CD8-positive, alpha-beta memory T cell (primary cell): ENCODE measurements at regions of chr3 and their contacts with region 1.

Region 1: DNA sequence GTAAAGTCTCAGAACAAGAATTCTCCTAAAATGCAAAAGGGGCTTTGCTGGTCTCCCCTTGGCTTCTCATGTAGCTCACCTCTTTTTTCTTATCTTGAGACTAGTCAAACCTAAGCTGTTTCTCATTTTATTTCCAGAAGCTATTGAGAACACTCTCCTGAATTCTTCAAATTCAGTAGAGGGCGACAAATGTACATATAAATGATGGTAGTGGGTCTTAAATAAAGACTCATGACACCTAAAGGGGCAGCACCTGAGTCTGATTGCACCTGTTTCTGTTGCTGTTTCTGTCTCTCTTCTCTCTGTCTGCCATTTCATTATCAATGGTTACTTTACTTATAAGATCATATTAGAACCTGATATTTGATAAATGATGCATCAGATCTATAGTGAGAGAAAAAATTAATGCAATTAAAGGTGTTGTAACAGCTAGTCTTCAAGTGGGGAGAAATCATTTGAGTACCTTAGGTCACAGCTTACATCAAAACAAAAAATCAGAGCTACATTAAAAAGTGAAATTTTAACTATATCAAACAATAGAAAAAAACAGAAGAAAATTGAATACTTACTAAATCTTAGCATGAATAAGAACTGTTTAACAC is 7.0 kb downstream of the ADIPOQ start:
- DNase-seq: peak in 2 of 5 donors; percentile 59 to 65
- H3K4me3 ChIP-seq: no peak overlapping the region
- H3K4me3 Mint-ChIP-seq: no peak overlapping the region
- H3K27ac ChIP-seq: no peak overlapping the region
- H3K27ac Mint-ChIP-seq: peak overlapping the region in 4 of 8 donors; percentile 22 to 71 (median 48)
- H3K4me1 ChIP-seq: no peaks in the 10 kb centered on the region
- H3K4me1 Mint-ChIP-seq: peaks cover 18 to 26% (median 18%) of the 10 kb centered on the region in 3 donors
- H3K27me3 ChIP-seq: no peaks in the 10 kb centered on the region
- H3K27me3 Mint-ChIP-seq: peaks cover 14 to 19% of the 10 kb centered on the region in 2 donors

Region 2: GRCh38 chr3:186909078-186909853 is 59.8 kb after region 1 on chr3:
- CTCF ChIA-PET with region 1: interaction called, 16 read pairs
- POLR2A ChIA-PET with region 1: no interaction called
- DNase-seq: peak; percentile 58 to 89 (median 82)
- H3K4me3 ChIP-seq: peak overlapping the region; percentile 40
- H3K4me3 Mint-ChIP-seq: peak overlapping the region; percentile 78 to 86 (median 80)
- H3K27ac ChIP-seq: peak overlapping the region; percentile 73
- H3K27ac Mint-ChIP-seq: peak overlapping the region; percentile 88 to 98 (median 92)
- H3K4me1 ChIP-seq: peaks cover 22% of the 10 kb centered on the region
- H3K4me1 Mint-ChIP-seq: peaks cover 41 to 56% (median 51%) of the 10 kb centered on the region in 3 donors
- H3K27me3 ChIP-seq: no peaks in the 10 kb centered on the region
- H3K27me3 Mint-ChIP-seq: no peaks in the 10 kb centered on the region

Region 3: DNA sequence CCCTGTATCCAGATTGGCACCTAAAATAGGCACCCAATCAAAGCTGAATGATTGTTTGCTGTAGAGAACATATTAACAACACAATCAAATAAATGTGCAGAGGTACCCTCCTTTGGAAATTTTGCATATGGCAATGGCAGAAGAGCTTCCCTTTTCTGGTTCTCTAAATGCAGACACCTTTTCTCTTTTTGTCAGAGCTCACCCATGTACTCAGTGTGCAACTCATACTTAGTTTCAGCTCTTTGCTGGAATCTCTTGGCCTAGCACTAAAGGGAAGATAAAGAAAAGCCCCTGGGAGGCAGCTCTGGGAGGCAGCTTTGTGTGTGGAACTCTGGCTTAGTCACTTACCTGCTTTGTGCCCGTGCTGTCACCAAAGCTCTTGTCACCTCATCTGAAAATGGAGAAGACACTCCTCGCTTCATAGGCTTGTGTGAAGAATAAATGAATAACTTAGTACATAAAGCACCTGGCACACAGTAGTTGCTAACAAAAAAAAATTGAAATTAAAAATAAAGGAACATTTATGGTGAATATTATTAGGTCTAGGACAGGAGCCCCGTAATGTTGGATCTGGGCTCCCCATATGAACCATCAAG is 109.7 kb after region 1 on chr3:
- CTCF ChIA-PET with region 1: interaction called, 11 read pairs
- POLR2A ChIA-PET with region 1: interaction called, 9 read pairs
- DNase-seq: no peak
- H3K4me3 ChIP-seq: no peak overlapping the region
- H3K4me3 Mint-ChIP-seq: no peak overlapping the region
- H3K27ac ChIP-seq: no peak overlapping the region
- H3K27ac Mint-ChIP-seq: peak overlapping the region in 7 of 8 donors; percentile 10 to 72 (median 51)
- H3K4me1 ChIP-seq: peaks cover 24% of the 10 kb centered on the region
- H3K4me1 Mint-ChIP-seq: peaks cover 82 to 90% (median 89%) of the 10 kb centered on the region in 3 donors
- H3K27me3 ChIP-seq: no peaks in the 10 kb centered on the region
- H3K27me3 Mint-ChIP-seq: no peaks in the 10 kb centered on the region

Region 4: DNA sequence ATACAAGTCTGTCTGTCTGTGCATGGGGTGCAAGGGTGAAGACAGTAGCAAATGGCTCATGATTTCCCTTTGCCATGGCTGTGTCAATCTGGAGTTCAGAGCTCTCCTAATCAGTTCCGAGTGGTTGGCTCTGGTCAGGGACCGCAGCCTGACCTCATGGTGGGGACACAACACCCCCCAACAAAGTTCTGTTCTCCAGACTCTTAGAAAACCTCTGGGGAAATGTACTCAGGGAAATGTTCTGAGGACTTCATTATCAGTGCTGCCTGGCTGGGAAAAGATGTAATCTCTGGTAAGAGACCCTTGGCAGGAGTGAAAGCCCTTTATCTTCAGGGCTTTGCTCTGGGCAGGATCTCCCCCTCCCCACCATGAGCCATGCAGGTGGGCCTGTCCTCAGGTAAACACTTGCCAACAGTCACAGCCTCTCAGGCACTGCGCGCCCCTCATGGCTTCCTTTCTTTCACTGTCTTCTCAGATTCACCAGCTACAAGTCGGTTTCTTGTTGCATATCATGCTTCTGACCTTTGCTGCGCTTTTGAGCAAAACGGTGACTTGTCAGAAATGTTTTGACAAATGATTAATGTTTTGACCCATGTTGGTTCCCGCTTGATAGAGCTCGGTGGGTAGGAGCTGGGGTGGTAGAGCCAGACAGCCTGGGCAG is 176.3 kb after region 1 on chr3:
- CTCF ChIA-PET with region 1: interaction called, 20 read pairs
- POLR2A ChIA-PET with region 1: no interaction called
- DNase-seq: peak in 1 of 5 donors; percentile 46
- H3K4me3 ChIP-seq: peak overlapping the region; percentile 64
- H3K4me3 Mint-ChIP-seq: peak overlapping the region; percentile 79 to 92 (median 84)
- H3K27ac ChIP-seq: peak overlapping the region; percentile 49
- H3K27ac Mint-ChIP-seq: peak overlapping the region; percentile 82 to 97 (median 89)
- H3K4me1 ChIP-seq: peaks cover 74% of the 10 kb centered on the region
- H3K4me1 Mint-ChIP-seq: peaks cover 68 to 81% (median 78%) of the 10 kb centered on the region in 3 donors
- H3K27me3 ChIP-seq: no peaks in the 10 kb centered on the region
- H3K27me3 Mint-ChIP-seq: no peaks in the 10 kb centered on the region

Region 5: DNA sequence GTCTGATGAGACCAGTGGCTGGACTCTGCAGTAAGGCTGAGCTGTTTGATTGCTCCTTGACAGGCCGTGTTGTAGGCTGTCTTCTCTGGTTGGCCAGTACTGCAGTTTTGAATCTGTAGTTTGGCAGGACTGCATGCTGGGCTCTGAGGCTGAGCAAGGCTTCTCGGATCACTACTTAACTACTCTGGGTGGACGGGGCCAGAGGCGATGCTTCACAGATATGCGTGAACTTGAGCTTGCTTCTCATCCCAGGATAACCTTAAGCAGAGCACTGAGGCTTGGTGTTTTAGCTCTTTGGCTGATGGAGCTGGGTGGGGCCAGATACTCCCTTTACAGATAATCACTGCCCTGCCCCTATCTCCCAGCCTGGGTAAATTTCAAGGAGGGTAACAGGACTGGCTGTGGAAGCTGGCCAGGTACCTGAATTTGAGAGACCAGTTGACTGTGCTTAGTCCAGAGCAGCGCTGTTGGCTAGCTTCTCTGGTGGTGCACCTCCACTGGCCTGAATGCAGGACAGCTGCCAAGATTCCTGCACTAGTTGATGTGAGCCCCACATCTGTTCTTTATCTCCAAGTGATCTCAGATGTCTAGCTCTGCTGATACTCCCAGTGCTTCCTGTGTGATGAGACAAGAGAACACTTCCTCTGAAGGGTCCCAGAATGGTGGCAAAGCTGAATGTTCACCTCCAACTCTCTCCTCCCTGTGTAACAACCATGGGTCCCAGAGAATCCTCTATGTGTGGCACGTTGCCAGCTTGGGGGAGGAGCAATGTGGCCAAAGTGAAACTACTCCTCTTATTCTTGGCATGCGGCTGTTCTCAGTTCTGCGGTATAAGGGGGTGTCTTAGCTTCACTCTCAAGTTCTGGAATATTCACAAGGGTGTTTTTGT is 252.0 kb after region 1 on chr3:
- CTCF ChIA-PET with region 1: interaction called, 12 read pairs
- POLR2A ChIA-PET with region 1: no interaction called
- DNase-seq: peak; percentile 27 to 68 (median 40)
- H3K4me3 ChIP-seq: peak overlapping the region; percentile 43
- H3K4me3 Mint-ChIP-seq: peak overlapping the region; percentile 17 to 86 (median 74)
- H3K27ac ChIP-seq: no peak overlapping the region
- H3K27ac Mint-ChIP-seq: peak overlapping the region; percentile 11 to 89 (median 56)
- H3K4me1 ChIP-seq: peaks cover 18% of the 10 kb centered on the region
- H3K4me1 Mint-ChIP-seq: peaks cover 17 to 40% (median 27%) of the 10 kb centered on the region in 3 donors
- H3K27me3 ChIP-seq: no peaks in the 10 kb centered on the region
- H3K27me3 Mint-ChIP-seq: no peaks in the 10 kb centered on the region

Region 6: DNA sequence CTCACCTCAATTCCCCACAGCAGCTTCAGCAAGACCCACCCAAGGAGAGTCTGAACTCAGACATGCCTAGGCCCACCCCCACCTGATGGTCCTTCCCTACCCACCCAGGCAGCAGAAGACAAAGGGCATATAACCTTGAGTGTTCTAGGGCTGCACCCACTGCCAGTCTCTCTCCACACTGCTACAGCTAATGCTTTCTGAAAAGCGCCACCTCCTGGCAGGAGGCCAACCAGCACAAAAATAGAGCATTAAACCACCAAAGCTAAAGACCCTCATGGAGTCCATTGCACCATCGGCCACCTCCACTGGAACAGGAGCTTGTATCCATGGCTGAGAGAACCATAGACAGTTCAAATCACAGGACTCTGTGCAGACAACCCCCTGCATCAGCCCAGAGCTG is 301.1 kb after region 1 on chr3:
- CTCF ChIA-PET with region 1: interaction called, 11 read pairs
- POLR2A ChIA-PET with region 1: no interaction called
- DNase-seq: peak; percentile 47 to 79 (median 56)
- H3K4me3 ChIP-seq: no peak overlapping the region
- H3K4me3 Mint-ChIP-seq: no peak overlapping the region
- H3K27ac ChIP-seq: no peak overlapping the region
- H3K27ac Mint-ChIP-seq: peak overlapping the region in 1 of 8 donors; percentile 54
- H3K4me1 ChIP-seq: no peaks in the 10 kb centered on the region
- H3K4me1 Mint-ChIP-seq: peaks cover 0 to 5% (median 4%) of the 10 kb centered on the region in 3 donors
- H3K27me3 ChIP-seq: no peaks in the 10 kb centered on the region
- H3K27me3 Mint-ChIP-seq: peaks cover 19 to 27% of the 10 kb centered on the region in 2 donors